ENCODE measurements at regions of chr2 and their contacts with region 1.

Region 1: DNA sequence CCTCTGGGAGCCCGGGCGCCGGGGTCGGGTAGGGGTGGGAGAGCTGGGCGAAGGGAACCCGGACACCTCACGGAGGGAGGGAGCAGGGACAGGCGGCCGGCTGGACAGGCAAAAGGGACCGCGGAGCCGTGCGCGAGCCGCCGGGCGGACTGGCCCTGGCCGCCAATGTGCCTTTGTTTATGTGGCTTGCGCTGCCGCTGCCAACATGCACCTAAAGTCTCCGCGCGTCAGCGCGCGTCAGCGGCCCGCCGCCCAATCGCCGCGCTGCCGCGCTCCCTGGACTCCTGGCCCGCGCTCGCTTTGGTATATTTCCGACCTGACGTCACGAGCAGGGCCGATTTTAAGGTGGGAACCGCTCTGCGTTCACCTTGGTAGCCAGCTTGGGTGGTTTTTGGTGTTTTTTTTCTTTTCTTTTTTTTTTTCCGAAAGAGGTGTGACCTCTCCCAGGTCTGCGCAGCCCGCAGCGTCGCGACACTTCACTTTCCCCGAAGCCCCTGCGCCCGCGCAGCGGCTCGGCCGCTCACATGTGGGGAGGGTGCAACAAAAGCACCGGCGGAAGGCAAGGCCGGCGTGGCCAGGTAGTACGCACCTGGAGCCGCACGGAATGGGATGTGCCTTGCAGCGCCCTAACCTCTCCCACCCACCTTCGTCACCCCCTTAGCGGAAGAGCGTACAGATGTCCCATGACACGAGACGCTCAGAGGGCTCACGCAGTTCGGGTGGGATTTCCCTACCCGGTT is at the start of gene NR4A2:
- DNase-seq: peak; percentile 87
- H3K4me3 ChIP-seq: peak within 1 kb of the TSS; percentile 58 to 75 (median 72)
- H3K27ac ChIP-seq: peak within 1 kb of the TSS; percentile 98
- H3K4me1 ChIP-seq: peaks cover 14% of the 10 kb centered on the region
- H3K27me3 ChIP-seq: peaks cover 3 to 14% of the 10 kb centered on the region in 2 experiments
- CTCF ChIP-seq: no peak
- POLR2A ChIP-seq: peak; percentile 36
- total RNA-seq, gene NR4A2: 1.0 and 1.8 TPM in 2 replicates

Region 2: GRCh38 chr2:156147594-156148330 is 184.9 kb before region 1 on chr2:
- CTCF ChIA-PET with region 1: no interaction called
- POLR2A ChIA-PET with region 1: no interaction called
- dilution Hi-C with region 1: no loop called
- intact Hi-C with region 1: no loop called
- DNase-seq: no peak
- H3K4me3 ChIP-seq: no peak overlapping the region
- H3K27ac ChIP-seq: no peak overlapping the region
- H3K4me1 ChIP-seq: no peaks in the 10 kb centered on the region
- H3K27me3 ChIP-seq: no peaks in the 10 kb centered on the region
- CTCF ChIP-seq: no peak
- POLR2A ChIP-seq: no peak

Region 3: DNA sequence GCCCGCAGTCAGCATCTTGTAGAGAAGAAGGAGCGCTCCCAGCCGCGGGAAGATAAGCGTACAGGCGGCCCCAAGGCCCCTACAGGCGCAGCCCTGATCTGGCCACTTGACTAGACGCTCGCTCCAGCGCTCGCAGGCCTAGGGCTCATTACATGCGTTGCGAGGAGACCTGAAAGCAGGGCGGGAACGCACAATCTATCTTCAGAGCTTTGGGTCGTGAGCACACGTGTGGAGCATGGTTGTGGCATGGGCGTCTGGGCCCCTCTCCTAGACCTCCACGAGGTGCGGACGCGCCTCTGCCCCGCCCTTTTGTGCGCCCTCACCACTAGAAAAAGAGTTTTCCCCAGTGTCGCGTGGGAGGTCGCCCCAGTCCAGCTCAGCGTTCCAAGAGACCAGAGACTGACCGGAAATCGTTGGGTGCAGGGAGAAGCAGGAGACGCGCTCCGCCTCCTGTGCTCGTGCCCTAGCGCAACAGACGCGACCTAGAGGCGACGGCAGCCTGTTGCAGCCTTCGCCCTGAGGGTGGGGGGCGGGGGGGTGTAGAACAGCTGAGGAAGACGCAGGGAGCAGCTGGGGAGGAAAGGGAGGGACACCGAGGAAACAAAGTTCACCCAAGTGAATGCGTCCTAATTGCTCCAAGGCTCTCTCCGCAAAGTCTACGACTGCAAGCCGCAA is 12.8 kb before region 1 on chr2:
- CTCF ChIA-PET with region 1: interaction called, 7 read pairs
- POLR2A ChIA-PET with region 1: no interaction called
- dilution Hi-C with region 1: no loop called
- intact Hi-C with region 1: loop called (anchors 1 kb)
- DNase-seq: no peak
- H3K4me3 ChIP-seq: peak overlapping the region in 1 of 3 experiments; percentile 18
- H3K27ac ChIP-seq: no peak overlapping the region
- H3K4me1 ChIP-seq: peaks cover 12% of the 10 kb centered on the region
- H3K27me3 ChIP-seq: peaks cover 40 to 59% of the 10 kb centered on the region in 2 experiments
- CTCF ChIP-seq: no peak
- POLR2A ChIP-seq: no peak

Region 4: DNA sequence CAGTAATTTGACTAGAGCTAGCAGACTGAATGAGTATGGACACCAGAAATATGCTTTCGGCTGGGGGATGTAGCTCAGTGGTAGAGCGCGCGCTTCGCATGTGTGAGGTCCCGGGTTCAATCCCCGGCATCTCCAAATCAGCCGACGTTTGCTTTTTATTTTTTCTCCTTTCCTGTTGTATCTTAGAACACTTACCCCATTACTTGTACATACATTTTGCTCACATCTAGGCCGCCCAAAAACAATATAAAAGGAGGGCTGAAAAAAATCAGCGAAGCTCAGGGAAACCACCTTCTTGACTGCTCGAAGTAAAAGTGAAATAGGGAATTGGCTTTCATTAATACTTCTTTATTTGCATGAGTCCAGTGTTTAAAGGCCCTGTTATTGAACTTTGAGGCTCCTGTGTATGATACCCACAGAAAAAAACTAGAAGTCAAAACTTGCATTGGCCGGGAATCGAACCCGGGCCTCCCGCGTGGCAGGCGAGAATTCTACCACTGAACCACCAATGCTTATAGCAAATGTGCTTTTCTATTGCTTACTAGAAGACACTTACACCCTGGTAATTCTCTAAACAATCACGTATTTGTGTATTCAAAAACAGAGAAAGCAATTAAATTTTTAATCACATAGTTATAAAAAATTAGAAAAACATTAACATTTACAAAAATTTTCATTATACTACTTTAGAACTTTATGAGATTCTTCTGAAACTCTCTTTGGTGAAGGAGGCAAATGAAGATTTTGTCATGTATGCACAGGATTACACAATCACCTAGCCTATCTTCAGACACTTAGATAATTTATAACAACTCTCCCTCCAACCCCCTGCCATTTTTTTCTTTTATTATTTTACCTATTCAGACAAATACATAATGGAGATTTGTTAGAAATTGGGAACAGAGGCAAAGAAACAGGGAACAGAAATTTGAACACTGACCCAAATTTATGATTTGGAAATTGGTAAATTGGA is 68.3 kb after region 1 on chr2:
- CTCF ChIA-PET with region 1: interaction called, 25 read pairs
- POLR2A ChIA-PET with region 1: interaction called, 3 read pairs
- dilution Hi-C with region 1: no loop called
- intact Hi-C with region 1: loop called (anchors 1 kb)
- DNase-seq: peak; percentile 91
- H3K4me3 ChIP-seq: peak overlapping the region; percentile 48 to 71 (median 49)
- H3K27ac ChIP-seq: peak overlapping the region; percentile 41
- H3K4me1 ChIP-seq: peaks cover 5% of the 10 kb centered on the region
- H3K27me3 ChIP-seq: peaks cover 0 to 5% of the 10 kb centered on the region in 2 experiments
- CTCF ChIP-seq: no peak
- POLR2A ChIP-seq: no peak

Region 5: DNA sequence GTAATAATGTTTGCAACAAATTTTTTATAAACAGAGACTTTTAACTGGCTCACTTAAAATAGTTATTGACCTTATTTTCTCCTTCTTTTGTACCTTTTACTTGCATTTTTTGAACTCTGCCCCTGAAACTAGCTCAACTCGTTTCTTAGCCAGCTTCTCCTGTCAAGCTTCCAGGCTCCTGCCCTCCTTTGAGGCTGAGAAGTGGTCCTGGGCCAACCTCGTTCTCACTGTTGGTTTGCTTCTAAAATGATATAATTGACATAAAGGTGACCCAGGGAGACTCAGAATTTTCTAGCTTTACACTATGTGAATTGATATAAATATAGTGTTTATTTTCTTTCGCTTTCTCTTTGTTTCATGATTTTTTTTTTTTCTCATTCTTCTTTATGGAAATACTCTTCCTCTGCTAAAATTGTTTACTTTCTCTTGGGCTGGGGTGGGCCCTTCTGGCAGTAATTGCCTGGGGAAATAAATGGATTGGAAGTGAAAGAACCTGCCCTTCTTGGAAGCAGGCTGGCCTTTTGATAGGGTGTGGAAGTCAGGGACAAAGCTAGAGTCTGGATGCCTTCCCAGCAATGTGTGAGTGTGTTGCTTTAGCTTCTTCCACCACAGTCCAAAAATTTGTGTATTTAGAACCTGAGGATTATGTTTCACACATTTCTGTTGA is 134.2 kb after region 1 on chr2:
- CTCF ChIA-PET with region 1: interaction called, 11 read pairs
- POLR2A ChIA-PET with region 1: no interaction called
- dilution Hi-C with region 1: no loop called
- intact Hi-C with region 1: loop called (anchors 10 kb)
- DNase-seq: peak; percentile 60
- H3K4me3 ChIP-seq: peak overlapping the region in 1 of 3 experiments; percentile 16
- H3K27ac ChIP-seq: no peak overlapping the region
- H3K4me1 ChIP-seq: peaks cover 27% of the 10 kb centered on the region
- H3K27me3 ChIP-seq: no peaks in the 10 kb centered on the region
- CTCF ChIP-seq: no peak
- POLR2A ChIP-seq: no peak

Region 6: GRCh38 chr2:157032017-157032416 is 699.3 kb after region 1 on chr2:
- CTCF ChIA-PET with region 1: no interaction called
- POLR2A ChIA-PET with region 1: interaction called, 4 read pairs
- dilution Hi-C with region 1: no loop called
- intact Hi-C with region 1: loop called (anchors 5 kb)
- DNase-seq: peak; percentile 82
- H3K4me3 ChIP-seq: no peak overlapping the region
- H3K27ac ChIP-seq: peak overlapping the region; percentile 50
- H3K4me1 ChIP-seq: peaks cover 9% of the 10 kb centered on the region
- H3K27me3 ChIP-seq: no peaks in the 10 kb centered on the region
- CTCF ChIP-seq: no peak
- POLR2A ChIP-seq: no peak